Mammary epithelial cell (primary cell): ENCODE measurements at regions of chr11 and their contacts with region 1.

Region 1: GRCh38 chr11:59753650-59754493 is 1.3 kb upstream of the STX3 start:
- DNase-seq: peak; percentile 58
- H3K4me3 ChIP-seq: peak overlapping the region; percentile 80 to 94 (median 83)
- H3K27ac ChIP-seq: peak overlapping the region; percentile 82
- H3K4me1 ChIP-seq: peaks cover 21% of the 10 kb centered on the region
- H3K27me3 ChIP-seq: no peaks in the 10 kb centered on the region
- CTCF ChIP-seq: peak; percentile 79 to 92

Region 2: GRCh38 chr11:59615637-59616395 is 138.1 kb before region 1 on chr11 and contains the start of gene OSBP:
- CTCF ChIA-PET with region 1: no interaction called
- dilution Hi-C with region 1: no loop called
- in situ Hi-C with region 1: no loop called
- intact Hi-C with region 1: loop called (anchors 5 kb)
- DNase-seq: peak; percentile 100
- H3K4me3 ChIP-seq: peak within 1 kb of the TSS; percentile 68 to 85 (median 79)
- H3K27ac ChIP-seq: peak within 1 kb of the TSS; percentile 79
- H3K4me1 ChIP-seq: peaks cover 17% of the 10 kb centered on the region
- H3K27me3 ChIP-seq: no peaks in the 10 kb centered on the region
- CTCF ChIP-seq: no peak
- total RNA-seq, gene OSBP: 34.0 to 52.0 TPM

Region 3: GRCh38 chr11:59668950-59669610 is 84.8 kb before region 1 on chr11 and contains the start of gene PATL1:
- CTCF ChIA-PET with region 1: interaction called, 4 read pairs
- dilution Hi-C with region 1: no loop called
- in situ Hi-C with region 1: no loop called
- intact Hi-C with region 1: loop called (anchors 1 kb)
- DNase-seq: peak; percentile 97
- H3K4me3 ChIP-seq: peak within 1 kb of the TSS; percentile 70 to 90 (median 78)
- H3K27ac ChIP-seq: peak within 1 kb of the TSS; percentile 94
- H3K4me1 ChIP-seq: peaks cover 15% of the 10 kb centered on the region
- H3K27me3 ChIP-seq: no peaks in the 10 kb centered on the region
- CTCF ChIP-seq: no peak
- total RNA-seq, gene PATL1: 11.2 to 42.8 TPM

Region 4: GRCh38 chr11:59776210-59777066 is 22.6 kb after region 1 on chr11:
- CTCF ChIA-PET with region 1: no interaction called
- dilution Hi-C with region 1: no loop called
- in situ Hi-C with region 1: no loop called
- intact Hi-C with region 1: loop called (anchors 1 kb)
- DNase-seq: peak; percentile 93
- H3K4me3 ChIP-seq: no peak overlapping the region
- H3K27ac ChIP-seq: no peak overlapping the region
- H3K4me1 ChIP-seq: peaks cover 17% of the 10 kb centered on the region
- H3K27me3 ChIP-seq: no peaks in the 10 kb centered on the region
- CTCF ChIP-seq: no peak

Region 5: GRCh38 chr11:59802639-59803176 is 48.8 kb after region 1 on chr11:
- CTCF ChIA-PET with region 1: no interaction called
- dilution Hi-C with region 1: no loop called
- in situ Hi-C with region 1: loop called (anchors 5 kb)
- intact Hi-C with region 1: loop called (anchors 1 kb)
- DNase-seq: peak; percentile 44
- H3K4me3 ChIP-seq: no peak overlapping the region
- H3K27ac ChIP-seq: no peak overlapping the region
- H3K4me1 ChIP-seq: peaks cover 6% of the 10 kb centered on the region
- H3K27me3 ChIP-seq: no peaks in the 10 kb centered on the region
- CTCF ChIP-seq: peak; percentile 59 to 67

Region 6: DNA sequence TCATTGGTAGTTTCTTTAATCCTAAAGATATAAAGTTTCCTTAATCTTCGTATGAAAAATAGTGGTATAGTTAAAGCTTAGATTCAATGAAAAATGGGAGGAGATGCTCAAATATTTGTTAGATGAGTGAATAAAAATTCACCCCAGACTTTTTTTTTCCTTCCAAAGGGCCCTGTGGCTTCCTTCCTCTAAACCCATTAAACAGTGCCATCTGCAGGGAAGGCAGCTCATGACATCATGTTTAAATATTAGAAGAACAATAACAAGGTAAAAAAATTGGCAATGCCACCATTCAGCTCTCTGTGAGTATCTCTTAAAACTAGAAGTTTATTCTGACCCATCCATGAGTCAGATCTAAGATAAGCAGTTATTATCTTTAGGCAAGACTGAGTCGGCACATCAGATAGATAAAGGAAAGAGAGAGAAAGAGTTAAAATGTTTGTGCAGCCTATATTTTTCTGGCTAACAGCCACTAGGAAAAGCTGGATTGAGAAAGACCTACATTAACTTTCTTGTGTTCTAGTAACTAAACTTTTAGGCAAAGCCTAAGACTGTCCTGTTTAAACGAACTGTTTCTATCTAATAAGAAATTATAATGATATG is 165.2 kb after region 1 on chr11:
- CTCF ChIA-PET with region 1: interaction called, 4 read pairs
- dilution Hi-C with region 1: no loop called
- in situ Hi-C with region 1: loop called in 1 of 2 experiments (anchors 25 kb)
- intact Hi-C with region 1: loop called (anchors 1 kb)
- DNase-seq: peak; percentile 68
- H3K4me3 ChIP-seq: no peak overlapping the region
- H3K27ac ChIP-seq: peak overlapping the region; percentile 47
- H3K4me1 ChIP-seq: peaks cover 6% of the 10 kb centered on the region
- H3K27me3 ChIP-seq: no peaks in the 10 kb centered on the region
- CTCF ChIP-seq: peak; percentile 67 to 75

Region 7: GRCh38 chr11:60175860-60176275 is 422.0 kb after region 1 on chr11:
- CTCF ChIA-PET with region 1: no interaction called
- dilution Hi-C with region 1: no loop called
- in situ Hi-C with region 1: no loop called
- intact Hi-C with region 1: no loop called
- DNase-seq: peak; percentile 52
- H3K4me3 ChIP-seq: no peak overlapping the region
- H3K27ac ChIP-seq: no peak overlapping the region
- H3K4me1 ChIP-seq: no peaks in the 10 kb centered on the region
- H3K27me3 ChIP-seq: no peaks in the 10 kb centered on the region
- CTCF ChIP-seq: no peak